CD4-positive, alpha-beta memory T cell (primary cell): ENCODE measurements at regions of chr12 and their contacts with region 1.

Region 1: DNA sequence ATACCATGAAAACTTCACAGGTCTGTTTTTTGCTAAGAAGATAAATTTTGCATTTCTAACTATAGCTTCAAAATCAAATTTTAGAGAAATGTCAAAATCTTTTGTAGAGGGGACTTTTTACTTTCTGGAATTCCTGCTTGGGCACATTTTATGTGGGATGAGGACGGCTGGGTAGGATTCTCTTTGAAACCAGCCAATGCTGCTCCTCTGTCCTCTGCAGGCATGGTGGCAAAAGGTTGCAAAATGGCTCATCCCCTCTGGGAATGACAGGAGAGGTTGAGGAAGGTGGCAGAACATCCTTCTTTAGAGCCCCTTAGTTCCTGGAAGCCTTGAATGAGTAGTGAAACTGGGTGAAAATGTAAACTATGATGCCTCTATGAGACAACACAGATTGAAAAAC is 6.7 kb upstream of the CCDC62 start:
- DNase-seq: no peak
- H3K4me3 ChIP-seq: no peak overlapping the region
- H3K4me3 Mint-ChIP-seq: no peak overlapping the region
- H3K27ac ChIP-seq: no peak overlapping the region
- H3K27ac Mint-ChIP-seq: peak overlapping the region in 3 of 7 donors; percentile 3 to 69 (median 36)
- H3K4me1 ChIP-seq: no peaks in the 10 kb centered on the region
- H3K4me1 Mint-ChIP-seq: peaks cover 0 to 4% (median 0%) of the 10 kb centered on the region in 4 donors
- H3K27me3 ChIP-seq: no peaks in the 10 kb centered on the region
- H3K27me3 Mint-ChIP-seq: no peaks in the 10 kb centered on the region

Region 2: GRCh38 chr12:122834104-122834920 is 66.6 kb after region 1 on chr12:
- CTCF ChIA-PET with region 1: no interaction called
- POLR2A ChIA-PET with region 1: no interaction called
- intact Hi-C with region 1: loop called (anchors 10 kb)
- DNase-seq: peak in 4 of 5 donors; percentile 21 to 31 (median 26)
- H3K4me3 ChIP-seq: peak overlapping the region; percentile 23 to 63
- H3K4me3 Mint-ChIP-seq: peak overlapping the region; percentile 91 to 96 (median 94)
- H3K27ac ChIP-seq: no peak overlapping the region
- H3K27ac Mint-ChIP-seq: peak overlapping the region; percentile 84 to 97 (median 93)
- H3K4me1 ChIP-seq: peaks cover 30% of the 10 kb centered on the region
- H3K4me1 Mint-ChIP-seq: peaks cover 24 to 45% (median 38%) of the 10 kb centered on the region in 4 donors
- H3K27me3 ChIP-seq: no peaks in the 10 kb centered on the region
- H3K27me3 Mint-ChIP-seq: no peaks in the 10 kb centered on the region